Heart right ventricle (tissue), 16 donors: ENCODE measurements at regions of chr12 and their contacts with region 1.

Region 1: DNA sequence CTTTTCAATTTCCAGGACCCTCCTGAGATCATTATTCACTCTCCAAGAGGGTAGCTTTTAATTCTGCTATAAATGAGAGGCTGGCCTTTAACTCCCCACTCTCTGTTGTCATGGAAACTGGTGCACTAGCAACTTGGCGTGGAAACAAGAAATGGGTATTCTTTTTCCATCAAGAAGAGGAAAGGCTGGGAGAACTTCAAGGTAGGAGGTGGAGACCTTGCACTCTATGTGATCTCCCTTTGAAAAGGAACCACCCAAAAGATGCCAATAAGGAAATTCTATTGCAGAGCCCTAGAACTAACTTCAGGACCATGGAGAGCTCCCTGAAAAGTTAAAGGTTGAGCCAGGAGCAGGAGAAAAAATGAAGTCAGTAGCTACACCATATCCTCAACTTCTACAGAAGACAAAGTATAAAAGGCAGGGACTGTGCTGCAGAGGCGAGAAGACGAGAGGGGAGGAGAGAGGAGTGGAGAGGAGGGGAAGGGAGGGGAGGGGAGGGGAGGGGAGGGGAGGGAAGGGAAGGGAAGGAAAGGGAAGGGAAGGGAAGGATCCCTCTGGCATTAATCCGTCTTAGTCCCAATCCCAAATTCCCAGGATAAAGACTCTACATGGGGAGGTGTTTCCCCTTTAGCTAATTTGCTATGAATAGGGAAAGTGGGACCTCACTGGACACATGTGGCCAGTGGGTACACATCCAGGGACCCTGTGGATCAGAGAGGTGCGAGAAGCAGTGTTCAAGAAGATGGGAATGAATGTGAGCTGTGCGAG is 46.7 kb upstream of the FICD start:
- DNase-seq: peak in 1 of 2 donors; percentile 10
- ATAC-seq: no peak
- H3K4me3 ChIP-seq: no peak overlapping the region
- H3K27ac ChIP-seq: no peak overlapping the region
- H3K4me1 ChIP-seq: no peaks in the 10 kb centered on the region
- H3K27me3 ChIP-seq: peaks cover 0 to 51% (median 27%) of the 10 kb centered on the region in 7 donors
- CTCF ChIP-seq: no peak

Region 2: DNA sequence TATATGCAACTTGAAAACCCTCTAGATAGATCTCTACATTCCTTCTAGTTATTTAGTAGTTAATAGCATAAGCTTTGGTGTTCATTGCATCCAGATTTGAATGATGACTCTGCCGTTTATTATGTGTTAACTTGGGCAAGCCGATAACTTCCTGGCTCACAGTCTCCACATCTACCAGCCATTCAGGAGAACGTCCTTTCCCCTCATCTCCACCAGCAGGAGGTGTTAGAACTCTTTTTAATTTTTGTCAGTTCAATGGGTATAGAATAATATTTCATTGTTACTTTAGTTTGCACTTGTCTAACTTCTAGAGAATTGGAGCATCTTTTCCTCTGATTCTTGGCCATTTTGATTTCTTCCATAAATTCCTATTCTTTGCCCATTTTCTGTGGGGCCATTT is 369.3 kb before region 1 on chr12:
- intact Hi-C with region 1: loop called in 1 of 10 experiments (anchors 10 kb)
- DNase-seq: no peak
- ATAC-seq: no peak
- H3K4me3 ChIP-seq: no peak overlapping the region
- H3K27ac ChIP-seq: no peak overlapping the region
- H3K4me1 ChIP-seq: no peaks in the 10 kb centered on the region
- H3K27me3 ChIP-seq: peaks cover 0 to 52% (median 31%) of the 10 kb centered on the region in 7 donors
- CTCF ChIP-seq: peak in 8 of 9 donors; percentile 12 to 56 (median 39)

Region 3: DNA sequence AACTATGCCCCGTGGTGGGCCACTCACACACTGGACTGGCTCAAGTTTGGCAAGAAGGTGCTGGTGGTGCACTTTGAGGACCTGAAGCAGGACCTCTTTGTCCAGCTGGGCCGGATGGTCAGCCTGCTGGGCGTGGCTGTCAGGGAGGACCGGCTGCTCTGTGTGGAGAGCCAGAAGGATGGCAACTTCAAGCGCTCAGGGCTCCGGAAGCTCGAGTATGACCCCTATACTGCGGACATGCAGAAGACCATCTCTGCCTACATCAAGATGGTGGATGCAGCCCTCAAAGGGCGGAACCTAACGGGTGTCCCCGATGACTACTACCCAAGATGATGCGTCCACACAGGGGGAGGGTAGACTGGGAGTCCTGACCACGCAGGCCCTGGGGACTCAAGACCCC is 220.4 kb before region 1 on chr12:
- intact Hi-C with region 1: no loop called
- DNase-seq: no peak
- ATAC-seq: no peak
- H3K4me3 ChIP-seq: no peak overlapping the region
- H3K27ac ChIP-seq: no peak overlapping the region
- H3K4me1 ChIP-seq: no peaks in the 10 kb centered on the region
- H3K27me3 ChIP-seq: peaks cover 0 to 36% (median 15%) of the 10 kb centered on the region in 7 donors
- CTCF ChIP-seq: no peak

Region 4: GRCh38 chr12:108750526-108751402 is 282.4 kb after region 1 on chr12:
- intact Hi-C with region 1: no loop called
- DNase-seq: no peak
- ATAC-seq: peak in 4 of 8 donors; percentile 11 to 59 (median 20)
- H3K4me3 ChIP-seq: no peak overlapping the region
- H3K27ac ChIP-seq: no peak overlapping the region
- H3K4me1 ChIP-seq: peaks cover 0 to 20% (median 0%) of the 10 kb centered on the region in 9 donors
- H3K27me3 ChIP-seq: no peaks in the 10 kb centered on the region
- CTCF ChIP-seq: no peak